Endothelial cell of umbilical vein (primary cell): ENCODE measurements at regions of chr6 and their contacts with region 1.

Region 1: GRCh38 chr6:67640484-67640883 is 994.6 kb upstream of the ADGRB3 start:
- DNase-seq: peak; percentile 39
- H3K4me3 ChIP-seq: no peak overlapping the region
- H3K27ac ChIP-seq: peak overlapping the region; percentile 48
- H3K4me1 ChIP-seq: peaks cover 7% of the 10 kb centered on the region
- H3K27me3 ChIP-seq: no peaks in the 10 kb centered on the region
- CTCF ChIP-seq: no peak
- POLR2A ChIP-seq: no peak

Region 2: DNA sequence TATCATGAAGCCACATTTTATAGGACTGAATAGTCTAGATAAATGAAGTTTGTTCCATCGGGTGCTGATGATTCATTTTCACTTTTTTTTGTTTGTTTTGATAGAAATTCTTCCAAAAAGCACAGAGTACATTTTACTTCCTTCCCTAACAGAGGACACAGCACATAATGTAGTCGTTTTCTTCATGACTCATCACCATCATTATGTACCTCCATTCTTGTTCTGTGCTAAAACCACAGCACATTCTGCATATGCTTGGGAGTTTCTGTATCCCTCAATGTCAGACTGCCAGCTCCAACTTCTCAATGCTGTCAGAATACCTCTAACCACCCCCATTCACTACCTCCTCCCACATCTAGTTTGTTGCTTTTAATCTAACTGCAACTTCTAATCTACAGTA is 10.3 kb before region 1 on chr6:
- CTCF ChIA-PET with region 1: interaction called, 4 read pairs
- POLR2A ChIA-PET with region 1: no interaction called
- dilution Hi-C with region 1: no loop called
- intact Hi-C with region 1: loop called (anchors 1 kb)
- DNase-seq: peak; percentile 53
- H3K4me3 ChIP-seq: no peak overlapping the region
- H3K27ac ChIP-seq: peak overlapping the region; percentile 62
- H3K4me1 ChIP-seq: peaks cover 16% of the 10 kb centered on the region
- H3K27me3 ChIP-seq: no peaks in the 10 kb centered on the region
- CTCF ChIP-seq: no peak
- POLR2A ChIP-seq: no peak

Region 3: DNA sequence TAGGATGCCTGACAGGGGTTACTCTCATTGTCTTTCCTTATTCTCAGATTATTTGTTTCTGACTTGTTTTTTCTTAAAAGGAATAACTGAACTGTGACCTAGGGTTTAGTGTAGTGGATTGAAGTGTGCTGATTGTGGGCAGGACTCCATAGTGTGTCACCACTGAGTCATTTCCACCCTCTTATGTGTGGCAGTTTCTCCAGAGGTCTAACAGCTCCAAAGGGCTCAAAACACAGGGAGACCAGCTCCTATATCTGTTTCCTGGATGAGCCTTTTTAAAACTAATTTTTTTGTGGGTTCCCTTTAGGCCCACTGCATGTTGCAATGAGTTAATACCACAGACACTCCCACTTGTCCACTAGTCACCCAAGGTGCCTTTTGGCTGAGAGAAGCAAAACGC is 43.5 kb after region 1 on chr6:
- CTCF ChIA-PET with region 1: no interaction called
- POLR2A ChIA-PET with region 1: no interaction called
- dilution Hi-C with region 1: no loop called
- intact Hi-C with region 1: loop called (anchors 5 kb)
- DNase-seq: peak; percentile 53
- H3K4me3 ChIP-seq: no peak overlapping the region
- H3K27ac ChIP-seq: peak overlapping the region; percentile 11
- H3K4me1 ChIP-seq: peaks cover 9% of the 10 kb centered on the region
- H3K27me3 ChIP-seq: no peaks in the 10 kb centered on the region
- CTCF ChIP-seq: no peak
- POLR2A ChIP-seq: no peak

Region 4: GRCh38 chr6:67888886-67889681 is 248.6 kb after region 1 on chr6:
- CTCF ChIA-PET with region 1: no interaction called
- POLR2A ChIA-PET with region 1: no interaction called
- dilution Hi-C with region 1: no loop called
- intact Hi-C with region 1: no loop called
- DNase-seq: no peak
- H3K4me3 ChIP-seq: no peak overlapping the region
- H3K27ac ChIP-seq: no peak overlapping the region
- H3K4me1 ChIP-seq: no peaks in the 10 kb centered on the region
- H3K27me3 ChIP-seq: no peaks in the 10 kb centered on the region
- CTCF ChIP-seq: no peak
- POLR2A ChIP-seq: no peak